ENCODE measurements at regions of chr2 and their contacts with region 1.

Region 1: GRCh38 chr2:121530212-121530705 is 421 bp upstream of the RNU4ATAC start:
- DNase-seq: peak; percentile 83
- H3K4me3 Mint-ChIP-seq: peak overlapping the region; percentile 86
- H3K27ac Mint-ChIP-seq: peak overlapping the region; percentile 99
- H3K4me1 Mint-ChIP-seq: peaks cover 37% of the 10 kb centered on the region
- H3K27me3 Mint-ChIP-seq: no peaks in the 10 kb centered on the region
- CTCF ChIP-seq: no peak

Region 2: GRCh38 chr2:121095257-121096080 is 434.8 kb before region 1 on chr2:
- CTCF ChIA-PET with region 1: no interaction called
- POLR2A ChIA-PET with region 1: no interaction called
- intact Hi-C with region 1: loop called (anchors 10 kb)
- DNase-seq: peak; percentile 81
- H3K4me3 Mint-ChIP-seq: no peak overlapping the region
- H3K27ac Mint-ChIP-seq: no peak overlapping the region
- H3K4me1 Mint-ChIP-seq: peaks cover 26% of the 10 kb centered on the region
- H3K27me3 Mint-ChIP-seq: no peaks in the 10 kb centered on the region
- CTCF ChIP-seq: peak; percentile 94

Region 3: GRCh38 chr2:121266543-121267106 is 263.6 kb before region 1 on chr2:
- CTCF ChIA-PET with region 1: no interaction called
- POLR2A ChIA-PET with region 1: no interaction called
- intact Hi-C with region 1: no loop called
- DNase-seq: peak; percentile 24
- H3K4me3 Mint-ChIP-seq: no peak overlapping the region
- H3K27ac Mint-ChIP-seq: no peak overlapping the region
- H3K4me1 Mint-ChIP-seq: peaks cover under 1% of the 10 kb centered on the region
- H3K27me3 Mint-ChIP-seq: no peaks in the 10 kb centered on the region
- CTCF ChIP-seq: no peak

Region 4: GRCh38 chr2:121479882-121480522 is 50.3 kb before region 1 on chr2:
- CTCF ChIA-PET with region 1: interaction called, 9 read pairs
- POLR2A ChIA-PET with region 1: interaction called, 109 read pairs
- intact Hi-C with region 1: loop called (anchors 2 kb)
- DNase-seq: peak; percentile 82
- H3K4me3 Mint-ChIP-seq: peak overlapping the region; percentile 49
- H3K27ac Mint-ChIP-seq: peak overlapping the region; percentile 24
- H3K4me1 Mint-ChIP-seq: peaks cover 46% of the 10 kb centered on the region
- H3K27me3 Mint-ChIP-seq: no peaks in the 10 kb centered on the region
- CTCF ChIP-seq: peak; percentile 28

Region 5: DNA sequence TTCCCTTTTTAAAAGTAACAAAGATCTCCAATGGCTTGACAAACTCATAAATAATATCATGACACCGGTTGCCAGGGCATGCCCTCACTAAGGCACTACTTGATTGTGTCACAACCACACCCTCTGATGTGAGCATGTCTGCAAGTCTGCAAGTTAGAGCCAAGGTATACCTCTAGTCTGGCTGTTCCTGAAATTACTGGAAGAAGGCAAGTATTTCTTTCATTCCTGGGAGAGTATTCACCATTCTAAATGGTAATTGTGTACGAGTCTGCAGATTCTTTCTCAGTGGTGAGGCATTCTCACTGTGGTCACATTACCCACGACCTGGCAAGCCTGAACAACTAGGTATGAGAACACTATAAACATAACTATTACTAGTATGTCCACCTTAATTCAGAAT is 25.3 kb before region 1 on chr2:
- CTCF ChIA-PET with region 1: interaction called, 5 read pairs
- POLR2A ChIA-PET with region 1: interaction called, 247 read pairs
- intact Hi-C with region 1: loop called (anchors 1 kb)
- DNase-seq: peak; percentile 86
- H3K4me3 Mint-ChIP-seq: peak overlapping the region; percentile 62
- H3K27ac Mint-ChIP-seq: peak overlapping the region; percentile 72
- H3K4me1 Mint-ChIP-seq: peaks cover 61% of the 10 kb centered on the region
- H3K27me3 Mint-ChIP-seq: no peaks in the 10 kb centered on the region
- CTCF ChIP-seq: no peak

Region 6: GRCh38 chr2:121634354-121635307 is 104.4 kb after region 1 on chr2:
- CTCF ChIA-PET with region 1: interaction called, 3 read pairs
- POLR2A ChIA-PET with region 1: interaction called, 10 read pairs
- intact Hi-C with region 1: no loop called
- DNase-seq: peak; percentile 54
- H3K4me3 Mint-ChIP-seq: peak overlapping the region; percentile 40
- H3K27ac Mint-ChIP-seq: peak overlapping the region; percentile 94
- H3K4me1 Mint-ChIP-seq: peaks cover 42% of the 10 kb centered on the region
- H3K27me3 Mint-ChIP-seq: no peaks in the 10 kb centered on the region
- CTCF ChIP-seq: no peak

Region 7: DNA sequence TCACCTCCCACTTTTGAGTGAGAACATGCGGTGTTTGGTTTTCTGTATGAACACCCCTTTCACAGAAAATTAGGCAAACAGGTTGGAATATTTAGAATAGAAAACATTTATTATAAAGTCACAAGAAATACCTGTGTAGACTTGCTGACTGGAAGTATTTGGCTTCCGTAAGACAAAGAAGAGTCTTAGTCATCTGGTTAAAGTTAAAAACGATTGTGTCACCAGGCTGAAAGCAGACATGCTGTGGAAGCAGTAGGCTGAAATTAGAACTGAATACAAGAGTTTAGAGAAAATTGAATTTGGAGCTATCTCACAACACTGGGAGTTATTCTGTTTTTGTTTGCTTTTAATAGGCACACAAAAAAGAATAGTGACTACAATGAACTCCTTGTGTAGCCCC is 135.2 kb after region 1 on chr2:
- CTCF ChIA-PET with region 1: no interaction called
- POLR2A ChIA-PET with region 1: interaction called, 19 read pairs
- intact Hi-C with region 1: no loop called
- DNase-seq: peak; percentile 69
- H3K4me3 Mint-ChIP-seq: no peak overlapping the region
- H3K27ac Mint-ChIP-seq: peak overlapping the region; percentile 76
- H3K4me1 Mint-ChIP-seq: peaks cover 27% of the 10 kb centered on the region
- H3K27me3 Mint-ChIP-seq: no peaks in the 10 kb centered on the region
- CTCF ChIP-seq: no peak

Region 8: DNA sequence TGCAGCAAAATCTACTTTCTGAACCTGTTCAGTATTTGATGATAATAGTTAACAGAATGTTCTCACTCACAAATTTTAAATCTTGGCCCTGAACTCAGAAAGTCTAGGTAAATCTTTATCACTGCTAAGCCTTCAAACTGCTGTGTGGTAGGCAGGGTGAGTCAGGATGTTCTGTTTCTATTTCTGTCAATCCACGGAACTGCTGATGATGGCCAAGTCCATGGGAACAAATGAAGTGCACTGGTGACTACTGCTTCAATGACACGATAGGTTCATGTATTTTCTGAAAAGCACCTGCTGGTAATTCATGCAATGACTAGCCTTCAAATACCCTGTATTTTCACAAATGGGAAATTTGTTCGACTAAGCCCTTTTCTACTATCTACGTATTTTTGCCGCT is 192.2 kb after region 1 on chr2:
- CTCF ChIA-PET with region 1: interaction called, 58 read pairs
- POLR2A ChIA-PET with region 1: interaction called, 43 read pairs
- intact Hi-C with region 1: loop called (anchors 1 kb)
- DNase-seq: peak; percentile 72
- H3K4me3 Mint-ChIP-seq: peak overlapping the region; percentile 60
- H3K27ac Mint-ChIP-seq: peak overlapping the region; percentile 87
- H3K4me1 Mint-ChIP-seq: peaks cover 13% of the 10 kb centered on the region
- H3K27me3 Mint-ChIP-seq: no peaks in the 10 kb centered on the region
- CTCF ChIP-seq: no peak